Vagina (tissue), 2 donors: ENCODE measurements at regions of chr14 and their contacts with region 1.

Region 1: DNA sequence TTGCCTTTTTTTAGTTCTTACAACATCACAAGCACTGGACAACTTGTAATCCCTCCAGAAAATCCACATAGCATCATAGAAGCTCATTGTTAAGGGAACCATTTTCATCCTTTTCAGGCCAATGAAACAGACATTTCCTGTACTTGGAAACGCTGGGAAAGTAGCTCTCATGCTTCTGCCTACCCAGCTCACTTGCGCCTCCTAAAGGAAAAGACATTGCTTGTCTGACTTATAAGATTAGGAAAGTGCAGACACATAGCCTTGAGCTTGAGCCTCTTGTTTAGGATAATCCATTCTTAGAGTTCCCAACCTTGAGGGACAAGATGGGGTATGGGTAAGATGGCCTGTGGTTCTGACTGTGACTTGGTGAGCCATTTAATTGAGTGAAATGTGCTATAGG is 589.5 kb downstream of the NOVA1 start:
- DNase-seq: no peak
- H3K4me3 ChIP-seq: no peak overlapping the region
- H3K27ac ChIP-seq: no peak overlapping the region
- H3K4me1 ChIP-seq: no peaks in the 10 kb centered on the region
- H3K27me3 ChIP-seq: no peaks in the 10 kb centered on the region
- CTCF ChIP-seq: no peak
- POLR2A ChIP-seq: no peak

Region 2: GRCh38 chr14:25929881-25930615 is 78.2 kb before region 1 on chr14:
- intact Hi-C with region 1: no loop called
- DNase-seq: no peak
- H3K4me3 ChIP-seq: no peak overlapping the region
- H3K27ac ChIP-seq: no peak overlapping the region
- H3K4me1 ChIP-seq: no peaks in the 10 kb centered on the region
- H3K27me3 ChIP-seq: no peaks in the 10 kb centered on the region
- CTCF ChIP-seq: no peak
- POLR2A ChIP-seq: no peak

Region 3: GRCh38 chr14:26549571-26549970 is 541.3 kb after region 1 on chr14:
- intact Hi-C with region 1: no loop called
- DNase-seq: no peak
- H3K4me3 ChIP-seq: no peak overlapping the region
- H3K27ac ChIP-seq: no peak overlapping the region
- H3K4me1 ChIP-seq: no peaks in the 10 kb centered on the region
- H3K27me3 ChIP-seq: no peaks in the 10 kb centered on the region
- CTCF ChIP-seq: no peak
- POLR2A ChIP-seq: no peak

Region 4: GRCh38 chr14:26863736-26864135 is 855.4 kb after region 1 on chr14:
- intact Hi-C with region 1: loop called (anchors 5 kb)
- DNase-seq: no peak
- H3K4me3 ChIP-seq: no peak overlapping the region
- H3K27ac ChIP-seq: no peak overlapping the region
- H3K4me1 ChIP-seq: no peaks in the 10 kb centered on the region
- H3K27me3 ChIP-seq: no peaks in the 10 kb centered on the region
- CTCF ChIP-seq: no peak
- POLR2A ChIP-seq: no peak